ENCODE measurements at regions of chr3 and their contacts with region 1.

Region 1: GRCh38 chr3:97910931-97911351 is 61.3 kb downstream of the RIOX2 start:
- DNase-seq: peak; percentile 7
- H3K4me3 Mint-ChIP-seq: peak overlapping the region; percentile 78
- H3K27ac Mint-ChIP-seq: peak overlapping the region; percentile 61
- H3K4me1 Mint-ChIP-seq: peaks cover 21% of the 10 kb centered on the region
- H3K27me3 Mint-ChIP-seq: no peaks in the 10 kb centered on the region

Region 2: GRCh38 chr3:97896547-97896946 is 14.4 kb before region 1 on chr3:
- intact Hi-C with region 1: no loop called
- DNase-seq: no peak
- H3K4me3 Mint-ChIP-seq: no peak overlapping the region
- H3K27ac Mint-ChIP-seq: no peak overlapping the region
- H3K4me1 Mint-ChIP-seq: peaks cover 6% of the 10 kb centered on the region
- H3K27me3 Mint-ChIP-seq: no peaks in the 10 kb centered on the region

Region 3: GRCh38 chr3:97981886-97982285 is 70.9 kb after region 1 on chr3:
- intact Hi-C with region 1: loop called (anchors 2 kb)
- DNase-seq: peak; percentile 43
- H3K4me3 Mint-ChIP-seq: peak overlapping the region; percentile 9
- H3K27ac Mint-ChIP-seq: peak overlapping the region; percentile 89
- H3K4me1 Mint-ChIP-seq: peaks cover 49% of the 10 kb centered on the region
- H3K27me3 Mint-ChIP-seq: no peaks in the 10 kb centered on the region

Measured in activated T-helper 1 cell treated with anti-CD3 and anti-CD28 coated beads, Interleukin-12 subunit alpha, Interleukin-12 subunit beta, Interleukin-2, Interleukin-4 antibody, amounts not matched to agents 30 ng/mL and 10 ng/mL and 1 ng/mL, durations not matched to agents 14 hours and 24 hours and 36 hours (primary cell).